Left cardiac atrium (tissue), 4 donors: ENCODE measurements at regions of chr3 and their contacts with region 1.

Region 1: DNA sequence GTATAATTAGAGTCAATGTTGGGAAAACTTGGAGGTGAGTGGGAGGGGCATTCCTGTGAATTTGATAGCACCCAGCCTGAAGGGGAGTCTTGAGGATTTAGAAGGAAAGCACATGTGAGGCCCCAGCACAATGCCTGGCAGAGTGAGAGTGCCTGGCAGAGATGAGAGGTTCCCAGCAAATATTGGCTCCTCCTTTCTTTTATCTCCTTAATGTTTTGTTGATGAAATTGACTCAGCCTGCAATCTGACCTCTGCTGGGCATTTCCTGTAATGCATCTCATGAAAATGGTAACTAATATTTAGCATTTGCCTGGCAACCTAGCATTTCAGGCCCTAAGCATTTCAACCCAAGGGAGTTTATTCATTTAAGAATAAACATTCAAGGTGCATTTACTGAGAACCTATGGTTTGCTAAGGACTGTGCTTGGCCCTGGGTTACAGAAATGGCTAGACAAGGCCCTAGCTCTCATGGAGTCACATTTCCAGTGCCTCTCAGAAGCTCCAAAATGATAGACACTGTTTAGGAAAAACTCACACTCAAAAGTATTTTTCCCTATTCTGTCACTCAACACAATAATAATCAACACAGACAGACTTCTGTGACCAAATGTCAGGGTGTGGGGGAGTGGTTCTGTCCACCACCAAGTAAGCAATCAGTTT is 19.0 kb downstream of the PDHB start:
- DNase-seq: peak; percentile 66
- ATAC-seq: peak; percentile 73 to 82

Region 2: DNA sequence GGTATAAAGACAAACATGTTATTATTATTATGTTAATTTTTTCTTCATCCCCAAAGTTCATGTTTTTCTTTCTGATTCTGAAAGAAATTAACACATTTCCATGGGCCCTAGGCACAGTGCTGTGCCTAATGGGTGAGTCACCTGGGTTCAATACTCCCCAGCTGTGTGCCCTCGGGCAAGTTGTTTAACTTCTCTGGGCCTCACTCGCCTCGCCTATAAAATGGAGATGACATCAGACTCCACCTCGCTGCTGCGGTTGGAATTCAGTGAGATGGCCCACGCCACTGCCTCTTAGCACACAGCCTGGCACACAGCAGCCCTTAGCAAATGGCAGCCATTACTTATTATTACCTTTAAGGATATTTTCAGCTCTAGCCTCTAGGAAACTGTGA is 226.5 kb before region 1 on chr3:
- intact Hi-C with region 1: loop called in 1 of 2 experiments (anchors 5 kb)
- DNase-seq: no peak
- ATAC-seq: no peak

Region 3: GRCh38 chr3:58317811-58318210 is 96.9 kb before region 1 on chr3:
- intact Hi-C with region 1: loop called in 1 of 2 experiments (anchors 5 kb)
- DNase-seq: no peak
- ATAC-seq: no peak

Region 4: DNA sequence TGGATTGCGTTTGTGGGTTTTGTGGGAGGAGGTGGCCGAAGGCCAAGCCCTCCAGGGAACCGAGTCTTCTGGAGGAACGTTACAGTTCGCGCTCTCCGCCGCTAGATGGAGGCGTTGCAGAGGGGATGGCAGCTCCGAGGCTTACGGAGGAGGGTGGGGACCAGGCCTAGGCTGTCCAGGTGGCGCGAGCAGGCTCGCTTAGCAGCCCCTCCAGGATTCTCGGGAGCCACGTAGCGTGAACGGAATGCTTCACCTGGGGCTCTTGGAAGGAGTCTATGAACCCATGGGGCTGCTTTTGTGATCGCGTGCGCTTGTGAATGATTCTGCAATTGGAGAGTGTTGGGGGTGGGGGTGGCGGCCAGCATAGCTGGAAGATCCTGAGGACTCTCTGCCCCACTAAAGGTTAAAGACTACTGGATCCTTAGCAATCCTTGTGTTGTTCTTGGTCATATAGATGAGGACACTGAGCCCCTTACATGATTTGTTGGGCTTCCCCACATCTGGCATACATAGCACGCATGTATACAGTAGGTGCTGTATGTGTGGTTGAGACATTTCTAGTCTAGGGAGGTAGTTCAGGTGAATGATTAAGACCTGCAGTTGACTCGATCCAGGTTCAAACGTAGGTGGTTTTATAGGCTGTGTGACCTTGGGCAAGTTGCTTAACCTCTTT is 226.2 kb after region 1 on chr3:
- intact Hi-C with region 1: no loop called
- DNase-seq: peak; percentile 83
- ATAC-seq: peak; percentile 88 to 90